Activated CD4-positive, alpha-beta T cell treated with anti-CD3 and anti-CD28 coated beads, Interleukin-2, amount 10 ng/mL, durations not matched to agents 24 days and 14 days (primary cell): ENCODE measurements at regions of chr1 and their contacts with region 1.

Region 1: GRCh38 chr1:109397538-109398342 is at the start of gene SORT1:
- DNase-seq: peak; percentile 87
- H3K4me3 Mint-ChIP-seq: peak within 1 kb of the TSS; percentile 85
- H3K27ac Mint-ChIP-seq: no peak within 1 kb of the TSS
- H3K4me1 Mint-ChIP-seq: peaks cover 11% of the 10 kb centered on the region
- H3K27me3 Mint-ChIP-seq: peaks cover 48% of the 10 kb centered on the region
- total RNA-seq, gene SORT1: 1.2 and 1.4 TPM in 2 replicates

Region 2: DNA sequence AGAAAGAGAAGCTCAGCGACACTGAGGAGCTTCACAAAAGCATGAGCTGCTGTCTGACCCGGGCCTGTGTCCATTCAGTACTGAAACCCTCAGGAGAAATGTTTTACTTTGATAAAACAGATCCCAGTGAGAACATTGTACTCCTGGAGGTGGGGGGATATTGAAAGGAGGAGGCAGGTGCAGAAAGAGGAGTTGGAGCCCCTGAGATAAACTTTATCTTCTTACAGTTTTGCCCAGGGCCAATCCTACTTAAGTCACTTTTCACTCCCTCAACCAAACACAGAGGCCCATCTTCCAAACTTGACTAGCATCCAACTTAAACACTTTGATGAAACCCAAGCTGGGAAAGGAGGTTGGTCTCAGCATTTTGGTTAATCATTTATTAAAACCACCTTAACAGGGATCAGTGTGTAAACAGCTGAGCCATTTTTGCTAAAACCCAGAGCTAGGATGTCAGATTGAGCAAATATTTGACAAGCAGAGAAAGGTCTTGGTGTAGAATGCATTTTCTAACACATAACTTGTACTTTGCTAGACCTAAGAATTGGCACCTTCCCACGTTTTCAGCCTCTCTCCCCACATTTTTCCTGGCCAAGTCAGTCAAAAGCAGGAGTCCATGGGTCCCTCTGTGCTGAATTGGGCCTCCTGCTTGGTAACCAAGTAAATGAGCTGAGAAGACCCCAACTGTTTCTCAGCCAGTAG is 216.5 kb before region 1 on chr1:
- intact Hi-C with region 1: no loop called
- DNase-seq: no peak
- H3K4me3 Mint-ChIP-seq: no peak overlapping the region
- H3K27ac Mint-ChIP-seq: no peak overlapping the region
- H3K4me1 Mint-ChIP-seq: no peaks in the 10 kb centered on the region
- H3K27me3 Mint-ChIP-seq: peaks cover 2% of the 10 kb centered on the region

Region 3: DNA sequence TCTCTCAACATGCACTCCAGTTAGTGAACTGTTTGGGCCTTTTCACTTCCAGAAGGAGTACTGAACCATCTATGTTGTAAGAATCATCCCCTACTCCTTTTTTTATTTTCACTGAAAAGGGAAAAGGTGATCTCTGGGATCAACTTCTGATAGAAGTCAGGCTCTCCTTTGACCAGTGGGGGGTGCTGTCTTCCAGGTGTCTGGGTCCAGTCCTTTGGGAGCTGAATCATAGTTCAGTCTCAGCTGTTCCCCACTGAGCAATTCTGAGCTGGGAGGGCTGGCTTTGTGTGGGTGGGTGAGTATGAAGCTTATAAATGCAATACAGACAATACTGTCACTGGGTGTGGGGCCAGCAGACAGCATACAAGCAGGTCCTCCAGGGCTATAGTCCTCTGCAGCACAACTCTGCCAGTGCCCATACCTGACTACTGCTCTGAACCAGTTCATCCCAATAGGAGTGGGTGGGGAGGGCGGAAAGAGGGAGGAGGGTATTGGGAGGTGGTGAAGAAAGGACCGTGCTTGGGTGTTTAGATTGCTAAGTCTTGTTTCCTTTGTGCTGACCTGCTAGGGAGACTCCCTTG is 196.5 kb before region 1 on chr1:
- intact Hi-C with region 1: loop called (anchors 1 kb)
- DNase-seq: peak; percentile 78
- H3K4me3 Mint-ChIP-seq: no peak overlapping the region
- H3K27ac Mint-ChIP-seq: no peak overlapping the region
- H3K4me1 Mint-ChIP-seq: peaks cover 23% of the 10 kb centered on the region
- H3K27me3 Mint-ChIP-seq: no peaks in the 10 kb centered on the region

Region 4: DNA sequence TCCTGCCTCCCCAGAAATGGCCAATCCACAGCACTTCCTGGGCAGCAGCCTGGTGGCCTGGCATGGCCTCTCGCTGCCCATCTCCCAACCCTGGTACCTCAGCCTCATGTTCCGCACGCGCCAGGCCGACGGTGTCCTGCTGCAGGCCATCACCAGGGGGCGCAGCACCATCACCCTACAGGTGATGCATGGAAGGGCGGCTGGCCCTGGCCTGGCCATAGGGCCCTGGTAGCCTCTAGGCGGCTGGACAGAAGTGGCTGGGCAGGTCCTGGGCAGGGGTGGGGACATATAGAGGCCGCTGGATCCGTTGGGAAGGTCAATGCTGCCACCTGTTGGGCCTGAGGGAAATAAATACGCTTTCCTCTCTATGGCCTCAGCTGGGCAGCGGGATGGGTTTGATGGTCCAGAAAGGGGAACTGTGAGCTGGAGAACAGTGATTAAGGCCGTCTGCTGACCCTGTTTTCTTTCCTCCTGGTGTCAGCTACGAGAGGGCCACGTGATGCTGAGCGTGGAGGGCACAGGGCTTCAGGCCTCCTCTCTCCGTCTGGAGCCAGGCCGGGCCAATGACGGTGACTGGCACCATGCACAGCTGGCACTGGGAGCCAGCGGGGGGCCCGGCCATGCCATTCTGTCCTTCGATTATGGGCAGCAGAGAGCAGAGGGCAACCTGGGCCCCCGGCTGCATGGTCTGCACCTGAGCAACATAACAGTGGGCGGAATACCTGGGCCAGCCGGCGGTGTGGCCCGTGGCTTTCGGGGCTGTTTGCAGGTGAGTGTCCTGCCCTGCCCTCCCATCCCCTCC is 133.9 kb before region 1 on chr1:
- intact Hi-C with region 1: loop called (anchors 1 kb)
- DNase-seq: peak; percentile 95
- H3K4me3 Mint-ChIP-seq: no peak overlapping the region
- H3K27ac Mint-ChIP-seq: peak overlapping the region; percentile 79
- H3K4me1 Mint-ChIP-seq: no peaks in the 10 kb centered on the region
- H3K27me3 Mint-ChIP-seq: no peaks in the 10 kb centered on the region

Region 5: GRCh38 chr1:109277434-109278204 is 120.1 kb before region 1 on chr1:
- intact Hi-C with region 1: loop called (anchors 1 kb)
- DNase-seq: peak; percentile 91
- H3K4me3 Mint-ChIP-seq: no peak overlapping the region
- H3K27ac Mint-ChIP-seq: no peak overlapping the region
- H3K4me1 Mint-ChIP-seq: peaks cover 17% of the 10 kb centered on the region
- H3K27me3 Mint-ChIP-seq: no peaks in the 10 kb centered on the region

Region 6: GRCh38 chr1:109282952-109283747 is 114.6 kb before region 1 on chr1 and contains the start of gene PSRC1:
- intact Hi-C with region 1: loop called (anchors 1 kb)
- DNase-seq: peak; percentile 98
- H3K4me3 Mint-ChIP-seq: peak within 1 kb of the TSS; percentile 95
- H3K27ac Mint-ChIP-seq: peak within 1 kb of the TSS; percentile 95
- H3K4me1 Mint-ChIP-seq: peaks cover 19% of the 10 kb centered on the region
- H3K27me3 Mint-ChIP-seq: peaks cover 2% of the 10 kb centered on the region
- total RNA-seq, gene PSRC1: 4.5 and 5.0 TPM in 2 replicates

Region 7: GRCh38 chr1:109350655-109351054 is 47.1 kb before region 1 on chr1:
- intact Hi-C with region 1: loop called (anchors 5 kb)
- DNase-seq: no peak
- H3K4me3 Mint-ChIP-seq: no peak overlapping the region
- H3K27ac Mint-ChIP-seq: no peak overlapping the region
- H3K4me1 Mint-ChIP-seq: peaks cover 16% of the 10 kb centered on the region
- H3K27me3 Mint-ChIP-seq: peaks cover 13% of the 10 kb centered on the region